ENCODE measurements at regions of chr11 and their contacts with region 1.

Region 1: GRCh38 chr11:9643751-9644150 is 20.1 kb upstream of the SWAP70 start:
- DNase-seq: no peak
- ATAC-seq: no peak
- H3K4me3 ChIP-seq: no peak overlapping the region
- H3K4me3 Mint-ChIP-seq: no peak overlapping the region
- H3K27ac ChIP-seq: no peak overlapping the region
- H3K27ac Mint-ChIP-seq: peak overlapping the region; percentile 16
- H3K4me1 ChIP-seq: peaks cover 38 to 47% of the 10 kb centered on the region in 2 donors
- H3K4me1 Mint-ChIP-seq: peaks cover 60% of the 10 kb centered on the region
- H3K27me3 ChIP-seq: no peaks in the 10 kb centered on the region
- H3K27me3 Mint-ChIP-seq: no peaks in the 10 kb centered on the region
- CTCF ChIP-seq: no peak

Region 2: DNA sequence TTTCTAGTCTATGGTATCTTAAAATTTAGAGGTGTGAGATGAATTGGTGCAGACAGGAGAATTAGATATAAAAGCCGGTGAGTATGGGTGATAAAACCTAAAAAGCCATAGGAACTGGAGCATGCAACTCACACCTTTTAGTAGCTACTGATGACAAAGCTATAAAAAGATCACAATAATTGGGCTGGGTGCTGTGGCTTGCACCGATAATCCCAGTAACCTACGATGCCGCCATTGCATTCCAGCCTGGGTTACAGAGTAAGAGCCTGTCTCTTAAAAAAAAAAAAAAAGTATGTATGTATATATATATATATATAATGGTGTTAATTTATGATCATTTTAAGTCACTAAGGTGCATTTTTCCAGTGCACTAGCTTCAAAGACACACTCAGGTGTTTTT is 53.0 kb before region 1 on chr11:
- CTCF ChIA-PET with region 1: no interaction called
- POLR2A ChIA-PET with region 1: no interaction called
- intact Hi-C with region 1: no loop called
- DNase-seq: no peak
- ATAC-seq: no peak
- H3K4me3 ChIP-seq: no peak overlapping the region
- H3K4me3 Mint-ChIP-seq: no peak overlapping the region
- H3K27ac ChIP-seq: no peak overlapping the region
- H3K27ac Mint-ChIP-seq: no peak overlapping the region
- H3K4me1 ChIP-seq: peaks cover 10 to 15% of the 10 kb centered on the region in 2 donors
- H3K4me1 Mint-ChIP-seq: peaks cover 14% of the 10 kb centered on the region
- H3K27me3 ChIP-seq: no peaks in the 10 kb centered on the region
- H3K27me3 Mint-ChIP-seq: no peaks in the 10 kb centered on the region
- CTCF ChIP-seq: no peak

Region 3: GRCh38 chr11:9629064-9629463 is 14.7 kb before region 1 on chr11:
- CTCF ChIA-PET with region 1: interaction called, 5 read pairs
- POLR2A ChIA-PET with region 1: interaction called, 4 read pairs
- intact Hi-C with region 1: loop called (anchors 2 kb)
- DNase-seq: no peak
- ATAC-seq: peak; percentile 67
- H3K4me3 ChIP-seq: no peak overlapping the region
- H3K4me3 Mint-ChIP-seq: no peak overlapping the region
- H3K27ac ChIP-seq: no peak overlapping the region
- H3K27ac Mint-ChIP-seq: peak overlapping the region; percentile 7
- H3K4me1 ChIP-seq: peaks cover 33 to 36% of the 10 kb centered on the region in 2 donors
- H3K4me1 Mint-ChIP-seq: peaks cover 60% of the 10 kb centered on the region
- H3K27me3 ChIP-seq: no peaks in the 10 kb centered on the region
- H3K27me3 Mint-ChIP-seq: no peaks in the 10 kb centered on the region
- CTCF ChIP-seq: no peak

Region 4: GRCh38 chr11:9656864-9657263 is 13.1 kb after region 1 on chr11:
- CTCF ChIA-PET with region 1: interaction called, 3 read pairs
- POLR2A ChIA-PET with region 1: no interaction called
- intact Hi-C with region 1: loop called (anchors 2 kb)
- DNase-seq: no peak
- ATAC-seq: no peak
- H3K4me3 ChIP-seq: no peak overlapping the region
- H3K4me3 Mint-ChIP-seq: no peak overlapping the region
- H3K27ac ChIP-seq: no peak overlapping the region
- H3K27ac Mint-ChIP-seq: no peak overlapping the region
- H3K4me1 ChIP-seq: peaks cover 16 to 21% of the 10 kb centered on the region in 2 donors
- H3K4me1 Mint-ChIP-seq: peaks cover 40% of the 10 kb centered on the region
- H3K27me3 ChIP-seq: no peaks in the 10 kb centered on the region
- H3K27me3 Mint-ChIP-seq: no peaks in the 10 kb centered on the region
- CTCF ChIP-seq: no peak

Region 5: GRCh38 chr11:9722893-9723292 is 79.1 kb after region 1 on chr11:
- CTCF ChIA-PET with region 1: no interaction called
- POLR2A ChIA-PET with region 1: no interaction called
- intact Hi-C with region 1: no loop called
- DNase-seq: no peak
- ATAC-seq: no peak
- H3K4me3 ChIP-seq: no peak overlapping the region
- H3K4me3 Mint-ChIP-seq: no peak overlapping the region
- H3K27ac ChIP-seq: peak overlapping the region; percentile 6 to 93
- H3K27ac Mint-ChIP-seq: peak overlapping the region; percentile 85
- H3K4me1 ChIP-seq: peaks cover 70 to 77% of the 10 kb centered on the region in 2 donors
- H3K4me1 Mint-ChIP-seq: peaks cover 66% of the 10 kb centered on the region
- H3K27me3 ChIP-seq: no peaks in the 10 kb centered on the region
- H3K27me3 Mint-ChIP-seq: no peaks in the 10 kb centered on the region
- CTCF ChIP-seq: no peak

Region 6: DNA sequence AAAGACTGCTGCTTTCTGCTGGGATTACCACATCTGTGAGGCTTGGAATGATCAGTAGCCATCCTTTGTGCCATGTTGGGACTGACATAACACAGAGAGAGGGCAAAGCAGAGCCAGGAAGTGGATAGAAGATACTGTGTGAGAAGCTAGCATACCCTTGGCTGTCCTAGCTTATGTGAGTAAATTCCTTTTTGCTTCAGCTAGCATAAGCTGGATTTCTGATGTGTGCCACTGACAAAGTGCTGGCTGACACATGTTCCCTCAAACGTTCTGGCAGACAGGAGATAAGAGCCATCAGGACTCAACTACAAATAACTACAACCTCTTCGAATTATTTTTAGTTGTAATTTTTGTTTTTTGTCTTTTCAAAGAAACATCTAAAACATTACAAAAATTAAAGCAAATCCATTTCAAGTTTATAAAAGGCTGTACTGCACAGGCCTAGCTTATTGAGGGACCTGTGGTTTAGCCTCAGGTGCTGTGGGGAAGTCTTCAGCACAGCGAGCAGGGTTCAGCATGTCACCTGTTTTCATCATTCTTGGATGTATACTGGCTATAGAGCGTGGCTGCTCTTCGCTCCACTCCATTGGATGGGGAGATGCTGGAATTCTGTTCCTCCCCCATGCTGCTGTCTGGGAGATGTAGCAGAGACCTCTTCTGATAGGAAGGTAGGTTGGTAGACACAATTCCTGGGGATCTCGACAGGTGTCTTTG is 141.0 kb after region 1 on chr11:
- CTCF ChIA-PET with region 1: no interaction called
- POLR2A ChIA-PET with region 1: no interaction called
- intact Hi-C with region 1: no loop called
- DNase-seq: no peak
- ATAC-seq: no peak
- H3K4me3 ChIP-seq: no peak overlapping the region
- H3K4me3 Mint-ChIP-seq: no peak overlapping the region
- H3K27ac ChIP-seq: no peak overlapping the region
- H3K27ac Mint-ChIP-seq: peak overlapping the region; percentile 59
- H3K4me1 ChIP-seq: peaks cover 14 to 21% of the 10 kb centered on the region in 2 donors
- H3K4me1 Mint-ChIP-seq: peaks cover 20% of the 10 kb centered on the region
- H3K27me3 ChIP-seq: no peaks in the 10 kb centered on the region
- H3K27me3 Mint-ChIP-seq: no peaks in the 10 kb centered on the region
- CTCF ChIP-seq: no peak

Region 7: GRCh38 chr11:10004526-10005113 is 360.9 kb after region 1 on chr11:
- CTCF ChIA-PET with region 1: no interaction called
- POLR2A ChIA-PET with region 1: no interaction called
- intact Hi-C with region 1: no loop called
- DNase-seq: no peak
- ATAC-seq: no peak
- H3K4me3 ChIP-seq: no peak overlapping the region
- H3K4me3 Mint-ChIP-seq: no peak overlapping the region
- H3K27ac ChIP-seq: no peak overlapping the region
- H3K27ac Mint-ChIP-seq: no peak overlapping the region
- H3K4me1 ChIP-seq: no peaks in the 10 kb centered on the region
- H3K4me1 Mint-ChIP-seq: no peaks in the 10 kb centered on the region
- H3K27me3 ChIP-seq: no peaks in the 10 kb centered on the region
- H3K27me3 Mint-ChIP-seq: no peaks in the 10 kb centered on the region
- CTCF ChIP-seq: no peak